Gastrocnemius medialis (tissue), 4 donors: ENCODE measurements at regions of chr2 and their contacts with region 1.

Region 1: DNA sequence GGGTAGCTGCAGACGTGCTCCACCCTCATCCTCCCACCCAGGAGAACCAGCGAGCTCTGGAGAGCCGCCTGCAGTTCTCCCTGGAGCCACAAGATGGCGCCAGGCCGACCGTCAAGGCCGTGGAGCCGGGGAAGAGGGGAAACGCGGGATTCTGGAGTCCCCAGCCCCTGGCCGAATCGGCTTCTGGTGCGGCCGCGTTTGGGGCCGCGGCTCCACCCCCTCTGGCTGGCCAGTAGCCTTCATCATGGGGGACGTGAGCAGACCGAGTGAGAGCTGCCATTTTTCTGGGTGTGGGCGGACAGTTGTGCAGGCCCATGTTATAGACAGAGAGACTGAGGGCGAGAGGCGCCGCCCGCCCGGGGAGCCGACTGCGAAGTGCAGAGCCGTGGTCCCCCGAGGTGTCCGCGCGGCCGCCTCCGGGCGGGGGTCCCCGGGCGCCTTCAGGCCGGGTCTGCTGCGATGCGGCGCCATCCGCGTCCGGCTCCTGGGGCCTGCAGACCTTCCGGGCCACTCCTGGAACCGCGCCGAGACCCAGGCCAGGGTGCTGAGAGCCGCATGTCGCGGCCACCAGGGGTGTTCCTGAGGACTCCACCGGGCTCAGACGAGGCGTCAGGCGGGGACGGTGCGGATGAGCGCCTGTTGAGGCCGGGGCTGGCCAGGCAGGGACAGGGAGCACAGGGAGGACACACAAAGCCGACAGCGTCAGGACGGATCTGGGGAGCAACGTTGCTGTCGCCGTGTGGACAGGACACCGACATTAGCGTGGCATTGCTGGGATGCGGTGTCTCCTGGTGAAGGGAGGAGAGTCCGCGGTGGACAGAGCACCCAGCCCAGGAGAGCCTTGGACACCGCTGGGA is 418.2 kb upstream of the HS6ST1 start:
- DNase-seq: peak; percentile 41 to 57
- ATAC-seq: peak; percentile 65 to 75
- H3K4me3 ChIP-seq: peak overlapping the region; percentile 26 to 52 (median 46)
- H3K27ac ChIP-seq: no peak overlapping the region
- H3K4me1 ChIP-seq: peaks cover 8 to 11% of the 10 kb centered on the region in 2 donors
- H3K27me3 ChIP-seq: no peaks in the 10 kb centered on the region
- CTCF ChIP-seq: peak; percentile 83 to 98 (median 87)
- POLR2A ChIP-seq: no peak

Region 2: GRCh38 chr2:129396980-129397599 is 660.2 kb after region 1 on chr2:
- in situ Hi-C with region 1: no loop called
- intact Hi-C with region 1: loop called (anchors 10 kb)
- DNase-seq: peak; percentile 44 to 74
- ATAC-seq: peak; percentile 87 to 99
- H3K4me3 ChIP-seq: no peak overlapping the region
- H3K27ac ChIP-seq: no peak overlapping the region
- H3K4me1 ChIP-seq: no peaks in the 10 kb centered on the region
- H3K27me3 ChIP-seq: no peaks in the 10 kb centered on the region
- CTCF ChIP-seq: peak; percentile 37 to 74 (median 61)
- POLR2A ChIP-seq: no peak

Region 3: GRCh38 chr2:129849559-129850160 is 1112.7 kb after region 1 on chr2:
- in situ Hi-C with region 1: loop called in 2 of 4 experiments (anchors 25 kb)
- intact Hi-C with region 1: loop called (anchors 5 kb)
- DNase-seq: no peak
- ATAC-seq: peak; percentile 52 to 78
- H3K4me3 ChIP-seq: peak overlapping the region in 1 of 4 donors; percentile 22
- H3K27ac ChIP-seq: no peak overlapping the region
- H3K4me1 ChIP-seq: no peaks in the 10 kb centered on the region
- H3K27me3 ChIP-seq: no peaks in the 10 kb centered on the region
- CTCF ChIP-seq: peak; percentile 50 to 78 (median 58)
- POLR2A ChIP-seq: no peak